Activated CD4-positive, alpha-beta memory T cell treated with anti-CD3 and anti-CD28 coated beads, Interleukin-2, amount 10 ng/mL, durations not matched to agents 7 days and 5 days (primary cell): ENCODE measurements at regions of chr7 and their contacts with region 1.

Region 1: GRCh38 chr7:150448789-150449147 is 1.7 kb upstream of the GIMAP8 start:
- DNase-seq: peak; percentile 93
- H3K4me3 Mint-ChIP-seq: peak overlapping the region; percentile 53
- H3K27ac Mint-ChIP-seq: peak overlapping the region; percentile 87
- H3K4me1 Mint-ChIP-seq: peaks cover 57% of the 10 kb centered on the region
- H3K27me3 Mint-ChIP-seq: no peaks in the 10 kb centered on the region

Region 2: GRCh38 chr7:150356265-150356897 is 92.4 kb before region 1 on chr7:
- CTCF ChIA-PET with region 1: no interaction called
- POLR2A ChIA-PET with region 1: no interaction called
- DNase-seq: no peak
- H3K4me3 Mint-ChIP-seq: no peak overlapping the region
- H3K27ac Mint-ChIP-seq: peak overlapping the region; percentile 13
- H3K4me1 Mint-ChIP-seq: peaks cover 43% of the 10 kb centered on the region
- H3K27me3 Mint-ChIP-seq: no peaks in the 10 kb centered on the region

Region 3: GRCh38 chr7:150404805-150405583 is 43.8 kb before region 1 on chr7:
- CTCF ChIA-PET with region 1: interaction called, 4 read pairs
- POLR2A ChIA-PET with region 1: interaction called, 11 read pairs
- DNase-seq: peak; percentile 86
- H3K4me3 Mint-ChIP-seq: peak overlapping the region; percentile 86
- H3K27ac Mint-ChIP-seq: peak overlapping the region; percentile 84
- H3K4me1 Mint-ChIP-seq: peaks cover 45% of the 10 kb centered on the region
- H3K27me3 Mint-ChIP-seq: no peaks in the 10 kb centered on the region

Region 4: GRCh38 chr7:150507947-150508602 is 59.3 kb after region 1 on chr7:
- CTCF ChIA-PET with region 1: interaction called, 158 read pairs
- POLR2A ChIA-PET with region 1: interaction called, 396 read pairs
- DNase-seq: no peak
- H3K4me3 Mint-ChIP-seq: peak overlapping the region; percentile 60
- H3K27ac Mint-ChIP-seq: peak overlapping the region; percentile 85
- H3K4me1 Mint-ChIP-seq: peaks cover 90% of the 10 kb centered on the region
- H3K27me3 Mint-ChIP-seq: no peaks in the 10 kb centered on the region

Region 5: GRCh38 chr7:150567169-150567568 is 118.4 kb after region 1 on chr7 and contains the start of gene GIMAP4:
- CTCF ChIA-PET with region 1: interaction called, 25 read pairs
- POLR2A ChIA-PET with region 1: interaction called, 112 read pairs
- DNase-seq: peak; percentile 39
- H3K4me3 Mint-ChIP-seq: peak within 1 kb of the TSS; percentile 95
- H3K27ac Mint-ChIP-seq: peak within 1 kb of the TSS; percentile 93
- H3K4me1 Mint-ChIP-seq: peaks cover 70% of the 10 kb centered on the region
- H3K27me3 Mint-ChIP-seq: no peaks in the 10 kb centered on the region
- total RNA-seq, gene GIMAP4: 277 to 282 TPM

Region 6: GRCh38 chr7:150685219-150686029 is 236.7 kb after region 1 on chr7 and contains the start of gene GIMAP2:
- CTCF ChIA-PET with region 1: interaction called, 6 read pairs
- POLR2A ChIA-PET with region 1: interaction called, 13 read pairs
- DNase-seq: peak; percentile 33
- H3K4me3 Mint-ChIP-seq: peak within 1 kb of the TSS; percentile 100
- H3K27ac Mint-ChIP-seq: peak within 1 kb of the TSS; percentile 98
- H3K4me1 Mint-ChIP-seq: peaks cover 76% of the 10 kb centered on the region
- H3K27me3 Mint-ChIP-seq: no peaks in the 10 kb centered on the region
- total RNA-seq, gene GIMAP2: 113 to 120 TPM

Region 7: DNA sequence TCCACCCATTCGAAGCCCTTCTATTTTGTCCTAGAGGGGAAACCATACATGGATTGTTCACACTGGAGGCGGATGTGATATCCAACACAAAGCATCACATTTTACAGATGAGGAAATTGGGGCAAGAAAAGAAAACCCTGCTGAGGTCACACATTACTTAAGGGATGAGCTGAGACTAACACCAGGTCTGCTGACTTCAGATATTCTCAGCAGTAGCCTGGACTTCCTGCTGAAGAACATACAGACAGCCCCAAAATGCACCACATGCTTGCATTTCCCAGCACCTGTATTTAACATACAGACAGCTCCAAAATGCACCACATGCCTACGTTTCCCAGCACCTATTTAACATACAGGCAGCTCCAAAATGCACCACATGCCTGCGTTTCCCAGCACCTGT is 299.6 kb after region 1 on chr7:
- CTCF ChIA-PET with region 1: interaction called, 105 read pairs
- POLR2A ChIA-PET with region 1: interaction called, 33 read pairs
- DNase-seq: no peak
- H3K4me3 Mint-ChIP-seq: no peak overlapping the region
- H3K27ac Mint-ChIP-seq: peak overlapping the region; percentile 16
- H3K4me1 Mint-ChIP-seq: peaks cover 76% of the 10 kb centered on the region
- H3K27me3 Mint-ChIP-seq: no peaks in the 10 kb centered on the region

Region 8: DNA sequence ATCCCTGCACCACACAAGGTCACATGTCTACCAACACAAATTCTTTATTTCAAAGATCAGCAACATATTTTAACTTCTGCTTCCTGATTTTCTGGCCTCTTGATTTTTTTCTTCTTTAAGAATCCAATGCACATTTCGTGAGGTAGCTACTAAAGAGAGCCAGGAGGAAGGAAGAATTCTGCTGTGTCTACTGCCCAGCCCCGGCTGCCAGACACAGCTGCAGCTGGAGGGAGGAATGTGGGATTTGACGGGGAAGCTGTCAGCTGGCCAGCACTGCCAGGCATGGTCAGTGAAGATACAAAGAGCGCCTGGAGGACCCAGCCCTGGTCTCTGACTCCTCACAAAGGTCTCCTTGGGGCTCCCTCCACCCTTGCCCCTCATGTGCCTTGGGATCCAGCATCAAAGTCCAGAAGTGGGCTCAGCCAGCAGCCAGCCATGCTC is 396.7 kb after region 1 on chr7:
- CTCF ChIA-PET with region 1: no interaction called
- POLR2A ChIA-PET with region 1: no interaction called
- DNase-seq: no peak
- H3K4me3 Mint-ChIP-seq: no peak overlapping the region
- H3K27ac Mint-ChIP-seq: no peak overlapping the region
- H3K4me1 Mint-ChIP-seq: no peaks in the 10 kb centered on the region
- H3K27me3 Mint-ChIP-seq: peaks cover 15% of the 10 kb centered on the region